Sciatic nerve (tissue), 2 donors: ENCODE measurements at regions of chr2 and their contacts with region 1.

Region 1: GRCh38 chr2:11583840-11584524 is 50.1 kb downstream of the GREB1 start:
- DNase-seq: peak; percentile 86
- ATAC-seq: peak; percentile 89

Region 2: DNA sequence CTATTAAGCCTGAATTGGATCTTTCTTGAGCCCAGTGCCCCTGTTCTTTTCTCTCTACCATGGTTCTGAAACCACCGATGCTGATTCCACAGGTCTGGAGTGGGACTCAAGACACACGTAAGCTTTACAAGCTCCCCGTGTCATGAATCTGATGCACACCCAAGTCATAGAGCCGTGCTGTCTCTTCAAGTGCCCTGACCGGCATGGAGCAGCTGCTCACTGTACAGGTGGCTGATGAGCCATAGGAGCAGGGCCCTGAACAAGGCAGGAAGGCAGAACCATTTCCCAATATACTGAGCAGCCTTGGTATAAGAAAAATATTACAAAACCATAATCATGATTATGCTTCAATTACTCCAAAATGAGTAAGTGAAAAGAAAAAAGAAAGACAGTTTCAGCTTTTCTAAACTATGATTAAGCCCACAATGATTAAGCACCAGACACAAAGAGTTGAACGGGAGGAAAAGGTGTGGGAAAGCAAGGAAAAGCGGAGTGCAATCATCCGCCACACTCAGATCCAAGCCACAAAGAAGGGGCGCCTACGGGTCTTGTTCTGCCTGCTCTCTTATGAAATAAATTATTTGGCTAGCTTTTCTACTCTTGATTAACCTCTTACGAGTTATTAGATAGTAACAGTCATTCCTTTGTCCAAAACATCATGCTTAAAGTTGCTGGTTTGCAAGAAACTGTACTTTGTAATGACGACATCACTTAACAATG is 935.9 kb before region 1 on chr2:
- intact Hi-C with region 1: no loop called
- DNase-seq: no peak
- ATAC-seq: no peak

Region 3: DNA sequence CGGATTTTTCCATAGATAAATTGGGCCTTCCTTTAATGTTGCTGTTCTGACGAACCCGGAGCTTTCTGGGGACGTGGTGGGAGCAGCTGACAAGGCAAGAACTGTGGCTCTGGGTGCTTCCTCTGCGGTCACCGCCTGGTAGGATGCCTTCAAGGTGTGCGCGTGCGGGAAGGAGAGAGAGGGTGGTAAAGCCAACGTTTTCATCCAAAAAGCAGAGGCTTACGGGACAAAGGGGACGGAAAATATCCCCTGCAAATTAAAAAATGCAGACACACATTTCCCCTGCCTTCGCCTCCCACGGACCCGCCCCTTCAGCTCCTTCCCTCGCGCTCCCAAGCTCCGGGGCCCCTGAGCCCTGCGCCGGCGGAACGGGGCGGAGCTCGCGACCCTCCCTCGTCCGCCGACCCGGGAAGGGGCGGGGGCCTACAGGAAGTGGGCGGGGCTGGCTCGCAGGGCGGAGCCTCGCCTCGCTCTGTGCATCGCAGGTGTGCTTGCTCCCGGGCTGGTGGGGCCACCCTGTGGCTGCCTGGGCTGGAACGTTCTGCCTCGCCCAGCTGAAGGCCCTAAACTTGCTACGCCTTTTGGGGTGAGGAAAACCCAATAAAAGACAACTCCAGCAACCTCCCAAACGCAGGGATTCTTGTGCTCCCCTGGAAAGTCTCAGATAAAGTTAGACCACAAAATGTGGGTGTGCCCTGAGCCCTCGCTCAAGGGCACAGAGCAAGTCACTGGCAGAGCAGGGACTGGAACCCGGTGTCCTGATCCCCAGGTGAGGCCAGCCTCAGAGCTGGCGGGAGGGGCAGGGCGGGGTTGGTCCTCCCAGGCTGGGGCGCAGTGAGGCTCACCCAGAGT is 454.2 kb before region 1 on chr2:
- intact Hi-C with region 1: loop called (anchors 5 kb)
- DNase-seq: peak; percentile 75
- ATAC-seq: peak; percentile 37

Region 4: DNA sequence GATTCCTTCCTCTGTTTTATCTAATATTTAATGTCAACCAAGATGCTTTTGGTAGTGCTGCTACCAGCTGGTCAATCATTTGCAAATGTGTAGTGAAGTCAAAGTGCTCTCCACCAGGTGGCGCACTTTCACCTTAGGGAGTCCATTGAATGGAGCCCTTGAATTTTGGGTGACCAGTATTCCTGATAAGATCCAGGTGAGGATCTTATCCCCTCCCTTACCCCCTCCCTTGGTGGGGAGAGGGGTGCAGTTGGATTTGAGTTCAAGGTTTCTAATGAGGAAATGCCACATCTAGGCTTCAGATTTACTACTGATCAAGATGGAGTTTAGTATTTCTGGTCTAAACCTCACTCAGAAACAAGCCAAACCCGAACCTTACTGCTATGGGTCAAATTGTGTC is 106.0 kb before region 1 on chr2:
- intact Hi-C with region 1: loop called (anchors 2 kb)
- DNase-seq: peak; percentile 97
- ATAC-seq: peak; percentile 82